HEK293T (cell line): ENCODE measurements at regions of chr17 and their contacts with region 1.

Region 1: DNA sequence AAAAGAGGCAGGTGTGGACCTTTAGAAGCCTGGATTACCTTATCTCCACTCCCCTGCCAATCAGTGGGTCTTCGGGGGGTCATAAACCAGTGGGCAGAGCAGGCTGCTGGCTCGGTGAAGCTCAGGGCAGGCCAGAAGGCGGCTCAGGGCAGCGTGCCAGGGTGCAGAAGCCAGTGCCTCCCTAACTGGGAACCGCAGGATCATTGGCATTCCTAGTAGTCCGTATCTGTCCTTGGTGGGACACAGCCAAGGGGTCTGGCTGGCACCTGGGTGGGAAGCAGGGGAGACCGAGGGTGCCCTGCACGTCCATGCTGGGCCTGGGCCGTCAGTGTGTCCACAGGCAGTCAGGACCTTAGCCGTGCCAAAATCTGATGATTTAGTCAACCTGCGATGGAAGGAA is 76.8 kb downstream of the SEC14L1 start:
- DNase-seq: no peak

Region 2: DNA sequence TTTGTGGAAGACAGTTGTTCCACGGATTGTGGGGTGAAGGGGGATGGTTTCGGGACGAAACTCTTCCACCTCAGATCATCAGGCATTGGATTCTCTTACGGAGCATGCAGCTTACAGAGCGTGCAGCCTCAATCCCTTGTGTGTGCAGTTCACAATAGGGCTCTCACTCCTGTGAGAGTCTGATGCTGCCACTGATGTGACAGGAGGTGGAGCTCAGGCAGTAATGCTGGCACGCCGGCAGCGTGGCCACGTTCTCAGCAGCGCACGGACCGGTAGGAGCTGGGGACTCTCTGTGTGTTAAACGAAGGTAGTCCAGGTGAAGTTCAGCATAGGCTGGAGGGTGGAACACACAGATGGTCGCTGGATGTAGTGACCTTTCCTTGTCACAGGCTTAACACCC is 39.0 kb before region 1 on chr17:
- CTCF ChIA-PET with region 1: no interaction called
- POLR2A ChIA-PET with region 1: no interaction called
- DNase-seq: no peak

Region 3: DNA sequence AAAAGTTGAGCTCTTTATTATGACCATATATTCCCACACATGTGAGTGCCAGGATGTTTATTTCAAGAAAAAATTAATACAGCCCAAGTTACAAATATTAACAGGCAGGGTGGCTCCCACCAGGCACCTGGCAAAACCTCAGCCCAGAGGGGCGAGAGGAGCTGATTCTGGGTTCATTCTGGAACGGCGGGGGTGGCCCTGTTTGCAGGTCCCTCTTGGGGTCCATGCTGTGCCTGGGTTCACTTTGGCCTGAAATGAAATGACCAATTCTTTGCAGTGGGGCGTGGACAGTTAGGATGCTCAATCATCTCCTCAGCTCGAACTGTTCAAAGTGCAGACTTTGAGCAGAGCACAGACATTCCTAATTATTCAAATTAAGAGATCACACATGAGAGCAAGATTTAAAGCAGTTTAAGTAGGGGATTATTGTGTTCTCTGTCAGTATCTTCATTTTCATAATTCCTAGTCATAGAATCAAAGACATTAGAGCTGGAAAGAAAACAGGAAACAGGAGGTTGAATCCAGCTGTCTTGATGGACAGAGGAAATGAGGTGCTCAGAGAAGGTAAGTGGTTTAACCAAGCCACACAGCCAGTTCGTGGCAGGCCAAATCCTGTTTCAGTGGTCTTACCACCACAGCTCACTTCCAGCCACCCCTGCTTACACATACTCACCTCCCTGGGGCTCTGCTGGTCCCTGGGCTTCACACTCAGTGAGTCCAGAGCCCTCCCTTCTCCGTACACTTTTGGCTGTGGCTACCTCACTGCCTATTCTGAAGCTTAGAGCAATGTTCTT is 377.0 kb after region 1 on chr17:
- CTCF ChIA-PET with region 1: interaction called, 10 read pairs
- POLR2A ChIA-PET with region 1: no interaction called
- DNase-seq: no peak